Head of caudate nucleus (tissue), 42 donors: ENCODE measurements at regions of chr9 and their contacts with region 1.

Region 1: GRCh38 chr9:16023446-16023845 is 470.6 kb downstream of the CCDC171 start:
- DNase-seq: no peak

Region 2: GRCh38 chr9:16069671-16070454 is 46.4 kb after region 1 on chr9:
- intact Hi-C with region 1: loop called (anchors 5 kb)
- DNase-seq: no peak